B cell (primary cell): ENCODE measurements at regions of chr2 and their contacts with region 1.

Region 1: GRCh38 chr2:234288974-234289455 is 207.9 kb downstream of the ARL4C start:
- DNase-seq: peak; percentile 77
- ATAC-seq: no peak
- H3K4me3 ChIP-seq: no peak overlapping the region
- H3K4me3 Mint-ChIP-seq: no peak overlapping the region
- H3K27ac ChIP-seq: no peak overlapping the region
- H3K27ac Mint-ChIP-seq: no peak overlapping the region
- H3K4me1 ChIP-seq: peaks cover 41 to 47% of the 10 kb centered on the region in 2 donors
- H3K4me1 Mint-ChIP-seq: peaks cover 49% of the 10 kb centered on the region
- H3K27me3 ChIP-seq: peaks cover 0 to 58% (median 9%) of the 10 kb centered on the region in 4 experiments
- H3K27me3 Mint-ChIP-seq: peaks cover 26% of the 10 kb centered on the region
- CTCF ChIP-seq: peak; percentile 74

Region 2: GRCh38 chr2:234135720-234136221 is 153.2 kb before region 1 on chr2:
- CTCF ChIA-PET with region 1: interaction called, 16 read pairs
- POLR2A ChIA-PET with region 1: no interaction called
- intact Hi-C with region 1: no loop called
- DNase-seq: peak; percentile 75
- ATAC-seq: peak; percentile 53
- H3K4me3 ChIP-seq: no peak overlapping the region
- H3K4me3 Mint-ChIP-seq: no peak overlapping the region
- H3K27ac ChIP-seq: no peak overlapping the region
- H3K27ac Mint-ChIP-seq: no peak overlapping the region
- H3K4me1 ChIP-seq: peaks cover 4 to 11% of the 10 kb centered on the region in 2 donors
- H3K4me1 Mint-ChIP-seq: peaks cover 15% of the 10 kb centered on the region
- H3K27me3 ChIP-seq: peaks cover 0 to 41% (median 17%) of the 10 kb centered on the region in 4 experiments
- H3K27me3 Mint-ChIP-seq: peaks cover 49% of the 10 kb centered on the region
- CTCF ChIP-seq: peak; percentile 86

Region 3: GRCh38 chr2:234218266-234219180 is 70.5 kb before region 1 on chr2:
- CTCF ChIA-PET with region 1: no interaction called
- POLR2A ChIA-PET with region 1: no interaction called
- intact Hi-C with region 1: no loop called
- DNase-seq: no peak
- ATAC-seq: no peak
- H3K4me3 ChIP-seq: no peak overlapping the region
- H3K4me3 Mint-ChIP-seq: no peak overlapping the region
- H3K27ac ChIP-seq: no peak overlapping the region
- H3K27ac Mint-ChIP-seq: no peak overlapping the region
- H3K4me1 ChIP-seq: no peaks in the 10 kb centered on the region
- H3K4me1 Mint-ChIP-seq: peaks cover 5% of the 10 kb centered on the region
- H3K27me3 ChIP-seq: peaks cover 0 to 15% (median 2%) of the 10 kb centered on the region in 4 experiments
- H3K27me3 Mint-ChIP-seq: peaks cover 31% of the 10 kb centered on the region
- CTCF ChIP-seq: no peak

Region 4: GRCh38 chr2:234308813-234309195 is 19.8 kb after region 1 on chr2:
- CTCF ChIA-PET with region 1: interaction called, 14 read pairs
- POLR2A ChIA-PET with region 1: no interaction called
- intact Hi-C with region 1: loop called (anchors 1 kb)
- DNase-seq: peak; percentile 91
- ATAC-seq: peak; percentile 92
- H3K4me3 ChIP-seq: no peak overlapping the region
- H3K4me3 Mint-ChIP-seq: peak overlapping the region; percentile 44
- H3K27ac ChIP-seq: no peak overlapping the region
- H3K27ac Mint-ChIP-seq: peak overlapping the region; percentile 26
- H3K4me1 ChIP-seq: peaks cover 24 to 26% of the 10 kb centered on the region in 2 donors
- H3K4me1 Mint-ChIP-seq: peaks cover 32% of the 10 kb centered on the region
- H3K27me3 ChIP-seq: peaks cover 0 to 39% (median 8%) of the 10 kb centered on the region in 4 experiments
- H3K27me3 Mint-ChIP-seq: peaks cover 32% of the 10 kb centered on the region
- CTCF ChIP-seq: no peak

Region 5: GRCh38 chr2:234324116-234324515 is 35.1 kb after region 1 on chr2:
- CTCF ChIA-PET with region 1: no interaction called
- POLR2A ChIA-PET with region 1: no interaction called
- intact Hi-C with region 1: no loop called
- DNase-seq: no peak
- ATAC-seq: no peak
- H3K4me3 ChIP-seq: no peak overlapping the region
- H3K4me3 Mint-ChIP-seq: no peak overlapping the region
- H3K27ac ChIP-seq: no peak overlapping the region
- H3K27ac Mint-ChIP-seq: no peak overlapping the region
- H3K4me1 ChIP-seq: peaks cover 2 to 3% of the 10 kb centered on the region in 2 donors
- H3K4me1 Mint-ChIP-seq: peaks cover 11% of the 10 kb centered on the region
- H3K27me3 ChIP-seq: peaks cover 0 to 9% (median 4%) of the 10 kb centered on the region in 4 experiments
- H3K27me3 Mint-ChIP-seq: peaks cover 17% of the 10 kb centered on the region
- CTCF ChIP-seq: no peak

Region 6: DNA sequence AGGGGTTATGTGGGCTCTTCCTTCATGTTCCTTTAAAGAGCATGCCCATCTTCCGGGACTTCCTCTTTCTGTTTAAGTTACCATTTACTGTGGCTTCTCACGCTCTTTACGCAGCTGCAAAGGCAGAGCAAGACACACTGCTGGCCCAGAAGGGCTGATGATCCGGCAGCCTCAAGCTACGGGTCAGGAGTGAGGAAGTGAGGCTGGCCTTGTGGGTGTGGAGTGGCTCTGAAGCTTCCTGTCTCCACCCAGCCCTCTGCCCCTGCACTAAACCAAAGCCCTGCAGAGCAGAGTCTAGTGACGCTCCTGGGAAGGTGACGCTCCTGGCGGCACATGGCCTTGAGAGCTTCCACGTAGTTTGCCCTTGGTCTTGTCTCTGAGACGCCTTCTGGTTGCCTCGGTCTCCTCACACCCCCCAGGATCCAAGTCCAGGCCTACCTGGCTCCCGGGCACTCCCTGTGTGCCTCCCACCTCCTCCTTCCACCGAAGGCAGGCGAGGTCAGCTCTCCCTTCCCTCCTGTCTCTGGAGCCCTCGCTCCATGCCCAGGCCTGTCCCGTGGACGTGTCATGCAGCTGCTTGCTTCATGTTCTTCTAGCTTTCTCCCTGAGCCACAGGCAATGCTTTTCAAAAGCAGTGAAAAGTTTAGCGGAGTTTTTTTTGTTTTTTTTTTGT is 157.5 kb after region 1 on chr2:
- CTCF ChIA-PET with region 1: interaction called, 19 read pairs
- POLR2A ChIA-PET with region 1: no interaction called
- intact Hi-C with region 1: loop called (anchors 2 kb)
- DNase-seq: peak; percentile 95
- ATAC-seq: peak; percentile 93
- H3K4me3 ChIP-seq: peak overlapping the region in 1 of 5 experiments; percentile 11
- H3K4me3 Mint-ChIP-seq: peak overlapping the region; percentile 84
- H3K27ac ChIP-seq: peak overlapping the region; percentile 95 to 98
- H3K27ac Mint-ChIP-seq: peak overlapping the region; percentile 96
- H3K4me1 ChIP-seq: peaks cover 69 to 80% of the 10 kb centered on the region in 2 donors
- H3K4me1 Mint-ChIP-seq: peaks cover 78% of the 10 kb centered on the region
- H3K27me3 ChIP-seq: no peaks in the 10 kb centered on the region
- H3K27me3 Mint-ChIP-seq: no peaks in the 10 kb centered on the region
- CTCF ChIP-seq: no peak

Region 7: DNA sequence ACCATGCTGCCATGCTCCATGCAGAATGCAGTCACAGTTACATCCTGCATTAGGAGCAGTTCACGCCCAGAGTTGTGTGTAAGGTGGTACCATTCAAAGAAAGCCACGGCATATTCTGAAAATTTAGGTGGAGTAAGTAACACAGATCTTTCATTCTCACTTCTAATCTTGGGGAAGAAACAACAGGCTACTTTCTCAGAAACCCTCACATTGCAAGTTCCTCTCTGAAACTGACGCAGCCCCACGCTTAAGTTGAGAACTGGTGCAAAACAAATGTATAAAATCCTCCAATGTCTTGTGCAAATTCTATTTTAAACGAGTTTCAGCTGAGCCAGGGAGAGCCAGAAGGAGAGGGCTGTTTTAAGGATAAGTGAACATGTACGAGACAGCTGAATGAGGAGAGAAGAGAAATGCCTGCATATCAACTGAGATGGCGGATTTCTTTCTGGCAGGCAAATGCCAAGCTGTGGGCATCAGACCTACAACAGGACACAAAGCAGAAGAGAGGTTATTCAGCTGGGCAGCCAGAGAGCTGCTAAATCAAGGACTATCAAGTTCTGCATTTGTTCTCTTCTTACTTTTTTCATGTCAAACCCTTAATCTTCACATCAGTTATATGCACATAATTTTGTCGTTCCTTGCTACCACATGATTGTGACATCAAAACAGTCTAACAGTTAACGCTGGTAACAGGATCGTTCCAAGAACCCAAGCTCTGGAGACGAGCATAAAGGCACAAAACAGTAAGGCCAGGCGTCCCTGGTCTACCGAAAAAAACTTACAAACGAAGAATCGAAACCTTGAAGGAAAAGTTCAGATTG is 201.5 kb after region 1 on chr2:
- CTCF ChIA-PET with region 1: interaction called, 57 read pairs
- POLR2A ChIA-PET with region 1: no interaction called
- intact Hi-C with region 1: no loop called
- DNase-seq: peak; percentile 59
- ATAC-seq: peak; percentile 36
- H3K4me3 ChIP-seq: peak overlapping the region in 2 of 5 experiments; percentile 7 to 27
- H3K4me3 Mint-ChIP-seq: peak overlapping the region; percentile 52
- H3K27ac ChIP-seq: peak overlapping the region; percentile 2 to 41
- H3K27ac Mint-ChIP-seq: peak overlapping the region; percentile 16
- H3K4me1 ChIP-seq: peaks cover 68 to 80% of the 10 kb centered on the region in 2 donors
- H3K4me1 Mint-ChIP-seq: peaks cover 77% of the 10 kb centered on the region
- H3K27me3 ChIP-seq: peaks cover 0 to 4% (median 0%) of the 10 kb centered on the region in 4 experiments
- H3K27me3 Mint-ChIP-seq: no peaks in the 10 kb centered on the region
- CTCF ChIP-seq: no peak